GM10248 (cell line): ENCODE measurements at regions of chr15 and their contacts with region 1.

Region 1: DNA sequence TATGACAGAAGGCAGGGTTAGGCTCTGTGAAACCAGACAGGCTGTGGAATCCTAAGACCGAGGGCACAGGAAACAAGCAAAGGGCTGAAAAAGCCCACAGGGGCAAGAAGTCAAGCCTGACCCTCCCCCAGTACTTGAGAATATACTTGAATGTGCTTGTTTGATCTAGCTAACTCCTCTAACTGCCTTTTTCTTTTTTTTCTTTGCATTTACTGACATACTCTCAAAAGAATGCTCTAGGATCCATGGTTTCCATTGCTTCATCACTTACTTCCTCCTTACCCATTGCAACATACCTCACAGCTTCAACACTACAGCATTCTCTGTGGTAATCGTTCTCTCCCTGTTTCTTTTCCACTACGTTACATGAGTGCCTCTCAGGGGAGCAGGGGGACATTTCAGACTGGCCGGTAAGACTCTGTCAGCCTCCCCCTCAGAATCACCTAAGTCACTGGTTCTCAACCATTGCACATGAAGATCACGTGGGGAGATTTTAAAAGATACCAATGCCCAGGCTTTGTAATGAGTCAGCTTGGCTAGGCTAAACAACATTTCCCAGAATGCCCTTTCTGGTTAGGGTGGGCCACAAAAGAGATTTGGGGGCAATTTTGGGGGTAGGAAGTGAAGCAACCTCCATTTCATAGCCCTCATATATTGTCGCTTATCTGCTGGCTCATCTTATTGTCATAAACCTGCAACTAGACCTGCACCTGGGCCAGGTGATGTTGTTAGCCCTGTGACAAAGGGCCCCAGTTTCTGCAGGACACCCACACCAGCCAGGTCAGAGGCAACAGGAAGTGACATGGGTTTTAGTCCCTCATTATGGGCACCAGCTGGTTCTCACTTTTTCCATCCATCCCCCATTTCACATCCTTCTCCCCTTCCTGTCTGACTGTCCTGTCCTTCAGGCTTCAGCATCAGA is 24.6 kb upstream of the RSL24D1 start:
- DNase-seq: peak; percentile 45
- CTCF ChIP-seq: no peak

Region 2: GRCh38 chr15:54722342-54722986 is 498.9 kb before region 1 on chr15:
- CTCF ChIA-PET with region 1: no interaction called
- POLR2A ChIA-PET with region 1: no interaction called
- DNase-seq: no peak
- CTCF ChIP-seq: no peak

Region 3: DNA sequence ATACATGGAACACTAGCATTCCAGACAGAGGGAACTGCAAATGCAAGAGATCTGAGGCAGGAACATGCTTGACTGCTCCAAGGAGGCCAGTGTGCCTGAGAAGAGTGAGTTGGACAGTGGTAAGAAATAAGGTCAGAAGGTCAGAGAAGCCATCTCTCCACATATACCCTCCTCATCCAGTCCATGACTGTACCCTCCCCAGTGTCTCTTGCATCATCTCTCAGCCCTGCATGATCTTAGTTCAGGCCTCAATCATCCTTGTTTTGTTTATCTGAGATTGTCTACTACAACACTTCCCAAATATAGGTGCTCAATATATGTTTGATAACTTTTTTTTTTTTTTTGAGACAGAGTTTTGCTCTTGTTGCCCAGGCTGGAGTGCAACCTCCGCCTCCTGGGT is 19.1 kb before region 1 on chr15:
- CTCF ChIA-PET with region 1: interaction called, 14 read pairs
- POLR2A ChIA-PET with region 1: interaction called, 4 read pairs
- DNase-seq: no peak
- CTCF ChIP-seq: no peak

Region 4: GRCh38 chr15:55290528-55291057 is 69.2 kb after region 1 on chr15:
- CTCF ChIA-PET with region 1: interaction called, 33 read pairs
- POLR2A ChIA-PET with region 1: interaction called, 6 read pairs
- DNase-seq: peak; percentile 84
- CTCF ChIP-seq: peak; percentile 91